HepG2 (cell line): ENCODE measurements at regions of chr9 and their contacts with region 1.

Region 1: GRCh38 chr9:84261082-84261746 is 79.3 kb downstream of the SLC28A3 start:
- DNase-seq: peak; percentile 50
- ATAC-seq: peak; percentile 97
- H3K4me3 ChIP-seq: no peak overlapping the region
- H3K27ac ChIP-seq: no peak overlapping the region
- H3K4me1 ChIP-seq: no peaks in the 10 kb centered on the region
- H3K27me3 ChIP-seq: peaks cover 0 to 35% of the 10 kb centered on the region in 2 experiments; a peak in 4 of 5 replicates
- CTCF ChIP-seq: peak; percentile 91
- EP300 ChIP-seq: no peak
- POLR2A ChIP-seq: no peak
- RAD21 ChIP-seq: peak; percentile 86

Region 2: DNA sequence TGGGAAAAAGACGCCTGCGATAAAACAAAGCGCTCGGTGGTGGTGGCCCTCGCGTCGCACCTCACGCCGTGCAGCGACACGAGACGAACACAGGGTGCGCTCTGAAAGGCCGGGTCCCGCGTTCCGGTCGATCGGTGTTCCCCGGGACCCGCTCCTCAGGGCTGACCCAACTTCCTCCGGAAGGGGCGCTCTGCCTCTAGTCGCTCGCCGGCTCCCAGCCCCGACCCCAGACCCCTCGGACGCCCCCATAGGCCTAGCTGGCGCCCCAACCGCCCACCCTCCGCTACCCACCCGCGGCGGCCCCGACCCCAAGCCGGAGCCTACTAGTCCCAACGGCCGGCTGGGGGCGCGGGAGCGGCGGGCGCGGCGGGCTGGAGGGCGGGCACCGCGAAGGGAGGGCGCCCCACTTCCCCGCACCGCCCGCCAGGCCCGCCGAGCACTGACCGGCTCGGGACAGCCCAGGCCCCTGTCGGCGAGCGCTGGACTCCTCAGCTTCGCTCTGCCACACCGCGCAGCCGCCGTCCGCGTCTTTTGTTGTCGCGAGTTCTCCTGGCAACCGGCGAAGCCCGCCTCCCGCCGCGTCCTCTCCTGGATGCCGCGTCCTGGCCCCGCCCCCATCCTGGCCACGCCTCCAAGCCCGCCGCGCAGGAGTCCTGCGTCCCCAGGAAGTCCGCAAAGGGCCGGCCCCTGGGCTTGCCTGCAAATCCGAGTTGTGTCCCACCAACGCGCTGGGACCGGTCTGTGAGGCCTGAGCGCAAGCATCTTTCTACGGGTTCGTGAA is 340.1 kb before region 1 on chr9 and contains the start of gene KIF27:
- CTCF ChIA-PET with region 1: interaction called, 8 read pairs
- POLR2A ChIA-PET with region 1: no interaction called
- in situ Hi-C with region 1: no loop called
- intact Hi-C with region 1: loop called (anchors 5 kb)
- DNase-seq: peak; percentile 92
- ATAC-seq: peak; percentile 96
- H3K4me3 ChIP-seq: peak within 1 kb of the TSS; percentile 63 to 70 (median 68)
- H3K27ac ChIP-seq: peak within 1 kb of the TSS; percentile 95
- H3K4me1 ChIP-seq: peaks cover 16% of the 10 kb centered on the region
- H3K27me3 ChIP-seq: no peaks in the 10 kb centered on the region
- CTCF ChIP-seq: peak; percentile 53
- EP300 ChIP-seq: no peak; a peak in 1 of 4 replicates
- POLR2A ChIP-seq: peak; percentile 90 to 98
- RAD21 ChIP-seq: no peak; the same call in none of the 2 replicates
- total RNA-seq, gene KIF27: 4.1 and 4.4 TPM in 2 replicates

Region 3: DNA sequence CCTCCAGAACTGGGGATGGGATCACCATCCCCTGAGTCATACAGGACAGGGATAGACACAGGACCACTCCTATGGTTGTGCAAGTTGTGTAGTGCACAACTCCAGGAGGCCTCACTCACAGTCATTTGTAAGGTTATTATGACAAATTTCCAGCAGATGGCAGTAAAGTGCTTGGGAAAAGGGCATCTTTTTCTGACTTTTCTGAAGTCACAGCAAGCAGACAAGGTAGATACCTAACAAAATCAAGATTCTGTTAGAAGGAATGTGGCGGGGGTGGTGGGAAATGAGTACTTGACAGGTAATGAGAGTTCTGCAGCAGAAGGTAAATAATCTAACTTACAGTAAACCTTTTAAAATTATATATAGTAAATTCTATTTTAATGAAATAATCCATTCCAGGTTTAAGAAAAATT is 323.3 kb before region 1 on chr9:
- CTCF ChIA-PET with region 1: interaction called, 24 read pairs
- POLR2A ChIA-PET with region 1: no interaction called
- in situ Hi-C with region 1: loop called (anchors 5 kb)
- intact Hi-C with region 1: loop called (anchors 1 kb)
- DNase-seq: peak; percentile 68
- ATAC-seq: peak; percentile 83
- H3K4me3 ChIP-seq: no peak overlapping the region
- H3K27ac ChIP-seq: no peak overlapping the region
- H3K4me1 ChIP-seq: peaks cover 18% of the 10 kb centered on the region
- H3K27me3 ChIP-seq: no peaks in the 10 kb centered on the region
- CTCF ChIP-seq: peak; percentile 78
- EP300 ChIP-seq: no peak
- POLR2A ChIP-seq: no peak
- RAD21 ChIP-seq: peak; percentile 80

Region 4: GRCh38 chr9:84170521-84171141 is 90.6 kb before region 1 on chr9:
- CTCF ChIA-PET with region 1: no interaction called
- POLR2A ChIA-PET with region 1: no interaction called
- in situ Hi-C with region 1: no loop called
- intact Hi-C with region 1: loop called (anchors 10 kb)
- DNase-seq: peak; percentile 45
- ATAC-seq: peak; percentile 93
- H3K4me3 ChIP-seq: no peak overlapping the region; a peak in 1 of 6 replicates
- H3K27ac ChIP-seq: no peak overlapping the region
- H3K4me1 ChIP-seq: peaks cover 17% of the 10 kb centered on the region; the same call in 1 of the 2 replicates
- H3K27me3 ChIP-seq: peaks cover 0 to 8% of the 10 kb centered on the region in 2 experiments; a peak in 2 of 5 replicates
- CTCF ChIP-seq: no peak; the same call in 1 of the 2 replicates
- EP300 ChIP-seq: no peak
- POLR2A ChIP-seq: no peak
- RAD21 ChIP-seq: no peak